ENCODE measurements at regions of chr4 and their contacts with region 1.

Region 1: DNA sequence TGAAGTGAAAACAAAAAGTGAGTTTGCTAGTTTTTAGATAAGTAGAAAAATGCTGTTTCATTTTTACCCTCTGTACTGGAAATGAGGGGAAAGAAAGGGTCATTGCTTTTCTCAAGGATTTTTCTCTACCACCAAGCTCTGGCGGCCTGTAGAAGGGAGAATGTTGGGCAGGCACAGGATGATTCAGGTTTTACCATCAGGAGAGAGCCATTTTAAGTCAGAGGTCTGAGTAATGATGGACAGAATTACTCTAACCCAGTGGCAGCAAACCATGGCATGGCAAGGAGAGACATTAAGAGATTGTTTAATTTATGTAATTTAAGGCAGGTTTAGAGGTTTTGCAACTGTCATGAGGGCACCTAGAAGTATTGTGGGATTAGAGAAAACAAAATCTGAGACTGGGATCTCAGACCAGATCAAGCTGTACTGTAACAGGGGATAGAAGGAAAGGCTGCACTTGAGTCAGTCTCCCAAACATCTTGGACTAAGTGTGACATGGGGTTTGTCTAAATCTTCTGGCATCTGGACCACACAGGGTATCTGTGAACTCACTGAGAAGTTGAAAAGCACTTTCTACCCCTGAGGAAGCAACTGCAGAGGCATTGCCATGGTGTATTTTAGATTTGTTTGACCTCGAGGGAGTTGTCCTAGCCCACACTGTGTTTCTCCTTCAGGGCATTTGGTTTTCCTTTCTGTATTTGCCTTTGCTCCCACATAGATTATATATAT is 81.6 kb downstream of the BANK1 start:
- DNase-seq: no peak
- ATAC-seq: peak; percentile 52
- H3K4me3 Mint-ChIP-seq: peak overlapping the region; percentile 25
- H3K27ac Mint-ChIP-seq: peak overlapping the region; percentile 90
- H3K4me1 Mint-ChIP-seq: peaks cover 79% of the 10 kb centered on the region
- H3K27me3 Mint-ChIP-seq: no peaks in the 10 kb centered on the region
- CTCF ChIP-seq: no peak

Region 2: DNA sequence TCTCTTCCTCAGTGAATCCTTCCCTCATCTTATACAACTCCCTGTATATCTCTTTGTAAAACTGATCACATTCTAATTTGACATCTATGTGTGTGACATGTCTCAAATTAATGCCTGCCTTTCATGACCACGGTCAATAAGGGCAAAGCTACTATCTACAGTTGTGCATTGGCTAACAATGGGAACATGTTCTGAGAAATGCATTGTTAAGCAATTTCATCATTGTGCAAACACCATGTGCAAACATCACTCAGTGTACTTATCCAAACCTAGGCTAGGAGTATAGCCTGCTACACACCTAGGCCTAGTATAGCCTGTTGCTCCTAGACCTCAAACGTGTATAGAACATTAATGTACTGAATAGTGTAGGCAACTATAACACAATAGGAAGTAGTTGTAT is 13.4 kb after region 1 on chr4:
- CTCF ChIA-PET with region 1: no interaction called
- POLR2A ChIA-PET with region 1: no interaction called
- intact Hi-C with region 1: loop called (anchors 2 kb)
- DNase-seq: no peak
- ATAC-seq: no peak
- H3K4me3 Mint-ChIP-seq: no peak overlapping the region
- H3K27ac Mint-ChIP-seq: peak overlapping the region; percentile 46
- H3K4me1 Mint-ChIP-seq: peaks cover 29% of the 10 kb centered on the region
- H3K27me3 Mint-ChIP-seq: no peaks in the 10 kb centered on the region
- CTCF ChIP-seq: no peak

Region 3: GRCh38 chr4:101987623-101988243 is 115.6 kb after region 1 on chr4:
- CTCF ChIA-PET with region 1: no interaction called
- POLR2A ChIA-PET with region 1: no interaction called
- intact Hi-C with region 1: no loop called
- DNase-seq: no peak
- ATAC-seq: peak; percentile 72
- H3K4me3 Mint-ChIP-seq: peak overlapping the region; percentile 64
- H3K27ac Mint-ChIP-seq: peak overlapping the region; percentile 93
- H3K4me1 Mint-ChIP-seq: peaks cover 81% of the 10 kb centered on the region
- H3K27me3 Mint-ChIP-seq: no peaks in the 10 kb centered on the region
- CTCF ChIP-seq: no peak

Region 4: GRCh38 chr4:102945066-102945465 is 1072.9 kb after region 1 on chr4:
- CTCF ChIA-PET with region 1: no interaction called
- POLR2A ChIA-PET with region 1: no interaction called
- intact Hi-C with region 1: no loop called
- DNase-seq: no peak
- ATAC-seq: no peak
- H3K4me3 Mint-ChIP-seq: no peak overlapping the region
- H3K27ac Mint-ChIP-seq: no peak overlapping the region
- H3K4me1 Mint-ChIP-seq: no peaks in the 10 kb centered on the region
- H3K27me3 Mint-ChIP-seq: no peaks in the 10 kb centered on the region
- CTCF ChIP-seq: no peak